ENCODE measurements at regions of chr15 and their contacts with region 1.

Region 1: GRCh38 chr15:99131441-99132023 is 26.7 kb downstream of the SYNM start:
- DNase-seq: no peak
- H3K4me3 Mint-ChIP-seq: no peak overlapping the region
- H3K27ac Mint-ChIP-seq: no peak overlapping the region
- H3K4me1 Mint-ChIP-seq: no peaks in the 10 kb centered on the region
- H3K27me3 Mint-ChIP-seq: no peaks in the 10 kb centered on the region
- CTCF ChIP-seq: no peak

Region 2: GRCh38 chr15:98769867-98770266 is 361.7 kb before region 1 on chr15:
- CTCF ChIA-PET with region 1: no interaction called
- POLR2A ChIA-PET with region 1: no interaction called
- intact Hi-C with region 1: loop called (anchors 5 kb)
- DNase-seq: no peak
- H3K4me3 Mint-ChIP-seq: no peak overlapping the region
- H3K27ac Mint-ChIP-seq: no peak overlapping the region
- H3K4me1 Mint-ChIP-seq: peaks cover 4% of the 10 kb centered on the region
- H3K27me3 Mint-ChIP-seq: no peaks in the 10 kb centered on the region
- CTCF ChIP-seq: no peak

Measured in MCF 10A (cell line).